Prostate gland (tissue), 2 donors: ENCODE measurements at regions of chr3 and their contacts with region 1.

Region 1: DNA sequence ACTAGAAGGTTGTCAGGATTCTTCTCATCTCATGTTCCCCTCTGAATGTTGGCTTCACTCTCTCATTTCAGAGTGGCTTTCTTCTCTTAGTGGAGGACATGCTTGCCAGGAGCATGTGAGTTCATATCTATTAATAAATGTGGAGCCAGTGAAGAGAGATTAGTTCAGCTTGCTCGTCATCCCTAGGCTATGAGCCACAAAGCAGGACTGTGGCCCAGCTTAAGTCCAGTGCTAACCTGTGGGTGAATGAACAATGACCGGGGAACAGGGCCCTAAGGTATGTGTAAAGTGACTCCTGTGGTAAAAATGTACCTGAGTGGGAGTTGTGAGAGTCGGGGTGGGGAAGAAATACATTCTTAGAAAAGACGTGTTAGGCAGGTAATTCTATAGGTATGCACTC is 96.9 kb upstream of the TBL1XR1 start:
- DNase-seq: no peak
- H3K4me3 ChIP-seq: no peak overlapping the region
- H3K27ac ChIP-seq: no peak overlapping the region
- H3K4me1 ChIP-seq: no peaks in the 10 kb centered on the region
- H3K27me3 ChIP-seq: no peaks in the 10 kb centered on the region
- CTCF ChIP-seq: no peak
- POLR2A ChIP-seq: no peak

Region 2: GRCh38 chr3:177340243-177340830 is 46.1 kb after region 1 on chr3:
- intact Hi-C with region 1: loop called (anchors 5 kb)
- DNase-seq: no peak
- H3K4me3 ChIP-seq: no peak overlapping the region
- H3K27ac ChIP-seq: no peak overlapping the region
- H3K4me1 ChIP-seq: peaks cover 3% of the 10 kb centered on the region
- H3K27me3 ChIP-seq: no peaks in the 10 kb centered on the region
- CTCF ChIP-seq: no peak
- POLR2A ChIP-seq: no peak